CD4-positive, alpha-beta memory T cell (primary cell): ENCODE measurements at regions of chr3 and their contacts with region 1.

Region 1: DNA sequence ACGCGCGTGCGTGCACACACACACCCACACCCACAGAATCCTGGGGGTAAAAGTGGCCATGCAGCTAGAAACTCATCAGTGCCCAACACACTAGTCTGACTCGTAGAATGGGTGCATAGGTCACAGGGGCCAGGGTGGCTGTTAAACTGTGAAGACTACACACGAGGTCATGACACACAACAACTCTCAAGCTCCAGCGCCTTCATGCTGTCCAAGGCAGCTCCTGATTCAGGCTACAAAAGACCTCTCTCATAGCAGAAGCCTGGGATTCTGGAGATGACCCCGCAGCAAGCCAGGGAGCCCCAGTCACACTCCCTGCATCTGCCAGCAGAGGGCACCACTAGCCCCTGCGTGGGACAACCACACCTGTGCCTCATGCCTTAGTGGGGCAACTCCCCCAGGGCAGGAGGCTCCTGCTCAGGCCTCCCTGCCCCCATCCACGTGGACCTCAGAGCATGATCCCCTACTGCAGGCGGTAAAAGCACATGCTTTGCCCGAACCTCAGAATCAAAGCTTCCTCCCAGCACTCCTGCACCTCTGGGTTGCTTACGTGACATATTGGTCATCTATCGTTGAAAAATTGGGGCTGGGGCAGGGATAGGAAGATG is 93.1 kb downstream of the LRIG1 start:
- DNase-seq: peak; percentile 67 to 75 (median 70)
- H3K4me3 ChIP-seq: no peak overlapping the region
- H3K4me3 Mint-ChIP-seq: no peak overlapping the region
- H3K27ac ChIP-seq: no peak overlapping the region
- H3K27ac Mint-ChIP-seq: peak overlapping the region in 6 of 7 donors; percentile 37 to 76 (median 48)
- H3K4me1 ChIP-seq: no peaks in the 10 kb centered on the region
- H3K4me1 Mint-ChIP-seq: peaks cover 0 to 4% (median 2%) of the 10 kb centered on the region in 4 donors
- H3K27me3 ChIP-seq: no peaks in the 10 kb centered on the region
- H3K27me3 Mint-ChIP-seq: no peaks in the 10 kb centered on the region

Region 2: GRCh38 chr3:65996589-65996988 is 411.1 kb before region 1 on chr3:
- CTCF ChIA-PET with region 1: no interaction called
- POLR2A ChIA-PET with region 1: no interaction called
- intact Hi-C with region 1: no loop called
- DNase-seq: no peak
- H3K4me3 ChIP-seq: no peak overlapping the region
- H3K4me3 Mint-ChIP-seq: no peak overlapping the region
- H3K27ac ChIP-seq: no peak overlapping the region
- H3K27ac Mint-ChIP-seq: peak overlapping the region in 1 of 7 donors; percentile 36
- H3K4me1 ChIP-seq: no peaks in the 10 kb centered on the region
- H3K4me1 Mint-ChIP-seq: no peaks in the 10 kb centered on the region
- H3K27me3 ChIP-seq: no peaks in the 10 kb centered on the region
- H3K27me3 Mint-ChIP-seq: peaks cover 0 to 2% of the 10 kb centered on the region in 2 donors

Region 3: GRCh38 chr3:66179793-66180192 is 227.9 kb before region 1 on chr3:
- CTCF ChIA-PET with region 1: no interaction called
- POLR2A ChIA-PET with region 1: no interaction called
- intact Hi-C with region 1: no loop called
- DNase-seq: no peak
- H3K4me3 ChIP-seq: no peak overlapping the region
- H3K4me3 Mint-ChIP-seq: no peak overlapping the region
- H3K27ac ChIP-seq: no peak overlapping the region
- H3K27ac Mint-ChIP-seq: no peak overlapping the region
- H3K4me1 ChIP-seq: no peaks in the 10 kb centered on the region
- H3K4me1 Mint-ChIP-seq: peaks cover 0 to 1% (median 0%) of the 10 kb centered on the region in 4 donors
- H3K27me3 ChIP-seq: no peaks in the 10 kb centered on the region
- H3K27me3 Mint-ChIP-seq: peaks cover 0 to 3% of the 10 kb centered on the region in 2 donors

Region 4: DNA sequence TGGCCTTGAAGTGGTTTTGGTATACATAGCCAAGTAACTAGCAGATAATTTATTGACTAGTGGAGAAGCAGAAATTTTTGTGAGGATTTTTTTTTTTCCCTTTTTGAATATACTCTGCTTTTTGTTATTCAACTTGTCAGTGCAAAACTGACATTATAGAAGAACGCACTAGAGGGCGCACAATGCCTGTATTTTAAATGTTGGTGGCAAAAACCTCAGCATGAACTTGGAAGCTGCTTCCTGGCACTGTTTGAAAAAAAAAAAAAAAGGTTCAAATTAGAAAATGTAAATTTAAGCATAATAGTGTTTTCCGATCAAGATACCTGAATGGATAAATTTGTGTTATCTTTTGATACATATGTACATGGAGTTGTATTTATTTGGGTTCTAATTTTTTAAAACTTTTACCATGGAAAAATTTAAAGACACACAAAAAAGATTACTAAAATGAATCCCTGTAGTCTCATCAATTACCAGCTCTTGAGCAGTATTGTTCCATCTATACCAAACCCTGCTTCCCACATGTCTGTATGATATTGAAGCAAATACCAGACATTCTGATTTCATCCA is 130.9 kb before region 1 on chr3:
- CTCF ChIA-PET with region 1: interaction called, 29 read pairs
- POLR2A ChIA-PET with region 1: no interaction called
- intact Hi-C with region 1: loop called (anchors 1 kb)
- DNase-seq: peak; percentile 71 to 75 (median 73)
- H3K4me3 ChIP-seq: no peak overlapping the region
- H3K4me3 Mint-ChIP-seq: no peak overlapping the region
- H3K27ac ChIP-seq: no peak overlapping the region
- H3K27ac Mint-ChIP-seq: peak overlapping the region; percentile 6 to 86 (median 71)
- H3K4me1 ChIP-seq: peaks cover 34% of the 10 kb centered on the region
- H3K4me1 Mint-ChIP-seq: peaks cover 25 to 45% (median 34%) of the 10 kb centered on the region in 4 donors
- H3K27me3 ChIP-seq: no peaks in the 10 kb centered on the region
- H3K27me3 Mint-ChIP-seq: no peaks in the 10 kb centered on the region

Region 5: GRCh38 chr3:66394019-66394752 is 13.5 kb before region 1 on chr3:
- CTCF ChIA-PET with region 1: interaction called, 43 read pairs
- POLR2A ChIA-PET with region 1: interaction called, 8 read pairs
- intact Hi-C with region 1: no loop called
- DNase-seq: peak; percentile 74 to 83 (median 81)
- H3K4me3 ChIP-seq: peak overlapping the region; percentile 44 to 49
- H3K4me3 Mint-ChIP-seq: peak overlapping the region; percentile 75 to 94 (median 90)
- H3K27ac ChIP-seq: peak overlapping the region; percentile 45
- H3K27ac Mint-ChIP-seq: peak overlapping the region; percentile 90 to 99 (median 97)
- H3K4me1 ChIP-seq: peaks cover 59% of the 10 kb centered on the region
- H3K4me1 Mint-ChIP-seq: peaks cover 50 to 61% (median 56%) of the 10 kb centered on the region in 4 donors
- H3K27me3 ChIP-seq: no peaks in the 10 kb centered on the region
- H3K27me3 Mint-ChIP-seq: no peaks in the 10 kb centered on the region

Region 6: DNA sequence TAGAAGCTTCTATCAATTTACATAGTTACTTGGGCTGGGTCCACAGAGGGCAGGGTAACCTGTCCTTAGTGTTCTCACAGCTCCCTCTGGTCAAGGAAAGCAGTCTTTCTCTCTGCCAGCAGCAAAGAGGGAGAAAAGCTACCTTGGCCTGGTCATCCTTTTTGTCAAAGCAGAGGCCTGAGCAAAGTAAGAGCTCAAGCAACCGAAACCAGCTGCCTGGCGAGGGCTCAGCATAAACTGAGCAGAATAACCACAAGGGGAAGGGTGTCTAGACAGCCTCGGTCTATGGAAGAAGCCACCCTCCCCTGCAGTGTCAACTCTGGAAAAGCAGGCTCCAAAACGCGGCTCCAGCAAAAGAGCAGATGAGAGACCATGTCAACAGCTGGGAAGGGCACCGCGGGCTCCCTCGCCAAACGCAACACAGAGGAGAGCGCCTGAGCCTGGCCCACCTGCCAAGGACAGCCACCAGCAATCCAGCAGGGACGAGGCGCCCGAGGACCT is 75.7 kb after region 1 on chr3:
- CTCF ChIA-PET with region 1: interaction called, 45 read pairs
- POLR2A ChIA-PET with region 1: interaction called, 3 read pairs
- intact Hi-C with region 1: loop called (anchors 5 kb)
- DNase-seq: peak in 2 of 5 donors; percentile 34 to 63
- H3K4me3 ChIP-seq: no peak overlapping the region
- H3K4me3 Mint-ChIP-seq: peak overlapping the region; percentile 59 to 89 (median 74)
- H3K27ac ChIP-seq: no peak overlapping the region
- H3K27ac Mint-ChIP-seq: peak overlapping the region; percentile 68 to 83 (median 81)
- H3K4me1 ChIP-seq: peaks cover 97% of the 10 kb centered on the region
- H3K4me1 Mint-ChIP-seq: peaks cover 53 to 79% (median 64%) of the 10 kb centered on the region in 4 donors
- H3K27me3 ChIP-seq: no peaks in the 10 kb centered on the region
- H3K27me3 Mint-ChIP-seq: no peaks in the 10 kb centered on the region

Region 7: GRCh38 chr3:66500576-66501482 is 93.1 kb after region 1 on chr3 and contains the start of gene LRIG1:
- CTCF ChIA-PET with region 1: interaction called, 21 read pairs
- POLR2A ChIA-PET with region 1: interaction called, 8 read pairs
- intact Hi-C with region 1: loop called (anchors 1 kb)
- DNase-seq: peak; percentile 97 to 98 (median 97)
- H3K4me3 ChIP-seq: peak within 1 kb of the TSS; percentile 9 to 72
- H3K4me3 Mint-ChIP-seq: peak within 1 kb of the TSS; percentile 93 to 99 (median 98)
- H3K27ac ChIP-seq: peak within 1 kb of the TSS; percentile 61
- H3K27ac Mint-ChIP-seq: peak within 1 kb of the TSS; percentile 82 to 96 (median 89)
- H3K4me1 ChIP-seq: peaks cover 61% of the 10 kb centered on the region
- H3K4me1 Mint-ChIP-seq: peaks cover 50 to 73% (median 59%) of the 10 kb centered on the region in 4 donors
- H3K27me3 ChIP-seq: no peaks in the 10 kb centered on the region
- H3K27me3 Mint-ChIP-seq: no peaks in the 10 kb centered on the region
- total RNA-seq, gene LRIG1: 66.3 to 71.7 TPM

Region 8: DNA sequence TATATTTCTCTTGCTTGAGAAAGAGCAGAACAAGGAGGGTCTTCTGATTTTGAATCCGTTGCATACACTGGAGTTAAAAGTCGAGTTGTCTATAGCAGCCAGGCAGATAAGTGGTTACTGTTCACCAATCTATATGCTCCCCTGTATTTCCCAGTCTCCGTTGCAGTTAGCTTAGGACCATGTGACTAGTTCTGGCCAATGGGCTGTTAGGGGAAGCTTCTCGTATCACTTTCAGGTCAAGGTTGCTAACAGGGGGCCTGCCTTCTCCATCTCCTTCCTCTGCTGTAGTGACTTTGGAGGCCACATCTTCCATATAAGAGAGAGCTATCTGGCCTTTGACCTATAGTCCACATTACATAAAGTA is 401.9 kb after region 1 on chr3:
- CTCF ChIA-PET with region 1: interaction called, 187 read pairs
- POLR2A ChIA-PET with region 1: no interaction called
- intact Hi-C with region 1: no loop called
- DNase-seq: no peak
- H3K4me3 ChIP-seq: no peak overlapping the region
- H3K4me3 Mint-ChIP-seq: no peak overlapping the region
- H3K27ac ChIP-seq: no peak overlapping the region
- H3K27ac Mint-ChIP-seq: no peak overlapping the region
- H3K4me1 ChIP-seq: no peaks in the 10 kb centered on the region
- H3K4me1 Mint-ChIP-seq: peaks cover 0 to 4% (median 0%) of the 10 kb centered on the region in 4 donors
- H3K27me3 ChIP-seq: no peaks in the 10 kb centered on the region
- H3K27me3 Mint-ChIP-seq: no peaks in the 10 kb centered on the region